ENCODE measurements at regions of chr10 and their contacts with region 1.

Region 1: DNA sequence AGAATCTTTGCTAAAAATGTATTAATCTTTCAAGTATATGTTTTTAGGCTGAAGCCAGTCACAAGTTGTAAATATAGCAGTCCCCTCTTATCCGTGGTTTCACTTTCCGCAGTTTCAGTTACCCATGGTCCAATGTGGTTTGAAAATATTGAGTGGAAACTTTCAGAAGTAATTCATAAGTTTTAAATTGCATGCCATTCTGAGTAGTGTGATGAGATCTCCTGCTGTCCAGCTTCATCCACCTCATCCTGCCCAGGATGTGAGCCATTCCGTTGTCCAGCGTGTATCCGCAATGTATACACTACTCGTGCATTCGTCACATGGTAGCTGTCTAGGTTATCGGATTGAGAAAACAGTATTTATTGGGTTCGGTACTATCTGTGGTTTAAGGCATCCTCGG is 12.2 kb downstream of the PDCD4 start:
- DNase-seq: peak; percentile 67
- ATAC-seq: peak; percentile 84
- H3K4me3 ChIP-seq: peak overlapping the region; percentile 62
- H3K27ac ChIP-seq: peak overlapping the region; percentile 80
- H3K4me1 ChIP-seq: peaks cover 38% of the 10 kb centered on the region
- H3K27me3 ChIP-seq: no peaks in the 10 kb centered on the region
- CTCF ChIP-seq: no peak

Region 2: DNA sequence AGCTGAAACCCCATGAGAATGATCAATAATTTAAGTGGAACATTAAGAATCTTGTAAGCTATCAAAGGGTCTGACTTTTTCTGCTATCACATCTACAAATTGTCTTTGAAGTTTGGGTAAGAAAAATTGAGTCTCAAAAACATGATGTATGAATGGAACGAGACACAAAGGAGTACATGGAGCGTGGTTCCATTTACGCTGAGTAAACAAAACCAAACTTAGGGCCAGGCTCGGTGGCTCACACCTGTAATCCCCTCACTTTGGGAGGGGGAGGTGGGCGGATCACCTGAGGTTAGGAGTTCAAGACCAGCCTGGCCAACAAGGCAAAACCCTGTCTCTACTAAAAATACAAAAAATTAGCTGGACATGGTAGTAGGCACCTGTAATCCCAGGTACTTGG is 292.2 kb before region 1 on chr10:
- CTCF ChIA-PET with region 1: no interaction called
- POLR2A ChIA-PET with region 1: interaction called, 15 read pairs
- intact Hi-C with region 1: no loop called
- DNase-seq: no peak
- ATAC-seq: no peak
- H3K4me3 ChIP-seq: no peak overlapping the region
- H3K27ac ChIP-seq: no peak overlapping the region
- H3K4me1 ChIP-seq: no peaks in the 10 kb centered on the region
- H3K27me3 ChIP-seq: no peaks in the 10 kb centered on the region
- CTCF ChIP-seq: no peak

Region 3: GRCh38 chr10:110758898-110759297 is 125.0 kb before region 1 on chr10:
- CTCF ChIA-PET with region 1: no interaction called
- POLR2A ChIA-PET with region 1: no interaction called
- intact Hi-C with region 1: loop called (anchors 5 kb)
- DNase-seq: peak; percentile 75
- ATAC-seq: peak; percentile 95
- H3K4me3 ChIP-seq: no peak overlapping the region
- H3K27ac ChIP-seq: peak overlapping the region; percentile 9; the same call in 1 of the 2 replicates
- H3K4me1 ChIP-seq: peaks cover 18% of the 10 kb centered on the region
- H3K27me3 ChIP-seq: no peaks in the 10 kb centered on the region
- CTCF ChIP-seq: no peak

Measured in PC-3 (cell line).